CD14-positive monocyte (primary cell): ENCODE measurements at regions of chr10 and their contacts with region 1.

Region 1: GRCh38 chr10:48509974-48510692 is 94.7 kb downstream of the ARHGAP22 start:
- DNase-seq: no peak
- H3K4me3 ChIP-seq: no peak overlapping the region
- H3K4me3 Mint-ChIP-seq: no peak overlapping the region
- H3K27ac ChIP-seq: no peak overlapping the region
- H3K27ac Mint-ChIP-seq: peak overlapping the region in 1 of 7 donors; percentile 8
- H3K4me1 ChIP-seq: peaks cover 41 to 46% of the 10 kb centered on the region in 2 donors
- H3K4me1 Mint-ChIP-seq: peaks cover 38% of the 10 kb centered on the region
- H3K27me3 ChIP-seq: no peaks in the 10 kb centered on the region
- H3K27me3 Mint-ChIP-seq: peaks cover 0 to 11% (median 5%) of the 10 kb centered on the region in 3 donors
- CTCF ChIP-seq: peak; percentile 32

Region 2: DNA sequence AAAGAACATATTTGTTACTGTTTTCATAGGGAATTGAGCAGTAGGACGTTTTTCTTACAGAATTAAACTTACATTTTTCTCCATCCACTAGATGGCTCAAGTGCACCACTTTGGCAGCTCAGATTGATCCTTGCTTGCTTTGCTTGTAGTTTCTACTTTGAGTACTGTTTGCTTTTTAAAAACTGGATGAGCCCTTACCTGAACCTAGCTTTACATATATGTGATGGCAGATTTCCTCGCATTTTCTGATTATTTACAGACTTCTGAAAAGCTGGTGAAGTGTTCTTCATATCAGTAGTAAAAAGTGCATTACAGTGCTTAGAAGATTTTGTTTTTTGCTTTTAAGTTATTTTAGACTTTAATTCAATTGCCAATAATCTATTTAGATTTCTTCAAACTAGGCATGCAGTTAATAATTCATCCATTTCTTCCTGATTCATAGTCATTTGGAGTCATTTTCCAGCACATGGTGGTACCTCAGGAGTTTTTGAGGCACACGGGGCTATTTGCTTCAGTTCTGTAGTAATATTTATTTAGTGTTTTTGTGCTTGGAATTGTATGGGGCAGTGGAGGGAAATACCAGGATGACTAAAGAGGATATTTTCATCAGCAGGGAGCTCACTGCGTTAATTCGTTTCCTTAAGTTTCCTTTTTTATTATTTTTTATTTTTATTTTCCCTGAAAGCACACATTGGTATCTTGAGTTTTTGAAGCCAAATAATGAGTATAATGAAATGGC is 146.3 kb before region 1 on chr10:
- intact Hi-C with region 1: loop called in 1 of 2 experiments (anchors 10 kb)
- DNase-seq: peak; percentile 23 to 50 (median 28)
- H3K4me3 ChIP-seq: no peak overlapping the region
- H3K4me3 Mint-ChIP-seq: no peak overlapping the region
- H3K27ac ChIP-seq: no peak overlapping the region
- H3K27ac Mint-ChIP-seq: no peak overlapping the region
- H3K4me1 ChIP-seq: no peaks in the 10 kb centered on the region
- H3K4me1 Mint-ChIP-seq: peaks cover 7% of the 10 kb centered on the region
- H3K27me3 ChIP-seq: no peaks in the 10 kb centered on the region
- H3K27me3 Mint-ChIP-seq: no peaks in the 10 kb centered on the region
- CTCF ChIP-seq: peak; percentile 79

Region 3: DNA sequence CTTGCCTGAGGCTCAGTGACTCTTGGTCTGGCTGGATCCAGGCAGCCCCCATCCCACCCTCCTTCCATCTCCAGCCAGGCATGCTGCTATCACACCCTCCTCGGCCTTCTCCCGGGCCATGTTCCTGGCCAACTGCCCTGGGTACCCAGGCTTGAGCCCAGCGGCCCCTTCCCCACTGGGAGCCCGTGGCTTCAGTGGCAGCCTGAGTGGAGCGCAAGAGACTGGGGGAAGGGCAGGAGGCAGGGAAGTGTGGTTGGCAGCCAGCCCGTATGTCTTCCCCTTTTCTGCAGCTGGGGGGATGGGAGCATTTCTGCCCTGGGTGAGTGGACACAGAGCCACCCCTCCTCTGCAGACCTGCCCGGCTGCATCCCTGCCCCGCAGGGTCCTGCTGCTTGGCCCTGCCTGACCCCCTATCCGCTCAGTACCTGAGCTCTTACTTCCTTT is 53.8 kb before region 1 on chr10:
- intact Hi-C with region 1: no loop called
- DNase-seq: peak; percentile 74 to 79 (median 75)
- H3K4me3 ChIP-seq: peak overlapping the region in 1 of 3 experiments; percentile 52
- H3K4me3 Mint-ChIP-seq: peak overlapping the region; percentile 63 to 78
- H3K27ac ChIP-seq: no peak overlapping the region
- H3K27ac Mint-ChIP-seq: peak overlapping the region in 1 of 7 donors; percentile 66
- H3K4me1 ChIP-seq: peaks cover 26 to 30% of the 10 kb centered on the region in 2 donors
- H3K4me1 Mint-ChIP-seq: peaks cover 20% of the 10 kb centered on the region
- H3K27me3 ChIP-seq: no peaks in the 10 kb centered on the region
- H3K27me3 Mint-ChIP-seq: peaks cover 0 to 3% (median 1%) of the 10 kb centered on the region in 3 donors
- CTCF ChIP-seq: no peak